CD4-positive, alpha-beta T cell (primary cell): ENCODE measurements at regions of chr10 and their contacts with region 1.

Region 1: GRCh38 chr10:133318494-133319127 is 9.9 kb downstream of the ZNF511 start:
- DNase-seq: peak; percentile 41 to 84 (median 64)
- ATAC-seq: peak; percentile 88
- H3K4me3 ChIP-seq: peak overlapping the region; percentile 55
- H3K4me3 Mint-ChIP-seq: peak overlapping the region; percentile 23
- H3K27ac ChIP-seq: no peak overlapping the region
- H3K27ac Mint-ChIP-seq: no peak overlapping the region
- H3K4me1 ChIP-seq: peaks cover 12% of the 10 kb centered on the region
- H3K4me1 Mint-ChIP-seq: peaks cover 13% of the 10 kb centered on the region
- H3K27me3 ChIP-seq: no peaks in the 10 kb centered on the region
- H3K27me3 Mint-ChIP-seq: peaks cover 11% of the 10 kb centered on the region
- CTCF ChIP-seq: peak; percentile 85

Region 2: DNA sequence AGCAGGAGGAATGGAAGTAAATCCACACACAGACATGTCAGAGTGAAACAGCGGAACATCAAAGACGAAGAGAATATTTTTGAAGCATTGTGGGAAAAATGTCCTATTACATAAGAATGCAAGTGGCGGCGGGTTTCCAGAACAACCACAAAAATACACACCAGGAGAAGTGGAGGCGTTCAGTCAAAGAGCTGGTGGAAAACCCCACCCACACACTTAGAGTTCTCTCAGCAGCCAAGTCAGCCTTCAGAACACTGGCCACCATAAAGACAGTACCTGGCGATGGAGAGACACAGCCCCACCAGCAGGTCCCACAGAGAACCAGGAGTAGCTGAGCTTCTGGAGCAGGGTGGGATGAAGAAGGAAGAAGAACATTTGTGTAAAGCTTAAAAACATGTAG is 556.3 kb before region 1 on chr10:
- CTCF ChIA-PET with region 1: no interaction called
- POLR2A ChIA-PET with region 1: no interaction called
- intact Hi-C with region 1: no loop called
- DNase-seq: no peak
- ATAC-seq: no peak
- H3K4me3 ChIP-seq: no peak overlapping the region
- H3K4me3 Mint-ChIP-seq: no peak overlapping the region
- H3K27ac ChIP-seq: no peak overlapping the region
- H3K27ac Mint-ChIP-seq: no peak overlapping the region
- H3K4me1 ChIP-seq: peaks cover 4% of the 10 kb centered on the region
- H3K4me1 Mint-ChIP-seq: peaks cover 10% of the 10 kb centered on the region
- H3K27me3 ChIP-seq: no peaks in the 10 kb centered on the region
- H3K27me3 Mint-ChIP-seq: no peaks in the 10 kb centered on the region
- CTCF ChIP-seq: no peak

Region 3: DNA sequence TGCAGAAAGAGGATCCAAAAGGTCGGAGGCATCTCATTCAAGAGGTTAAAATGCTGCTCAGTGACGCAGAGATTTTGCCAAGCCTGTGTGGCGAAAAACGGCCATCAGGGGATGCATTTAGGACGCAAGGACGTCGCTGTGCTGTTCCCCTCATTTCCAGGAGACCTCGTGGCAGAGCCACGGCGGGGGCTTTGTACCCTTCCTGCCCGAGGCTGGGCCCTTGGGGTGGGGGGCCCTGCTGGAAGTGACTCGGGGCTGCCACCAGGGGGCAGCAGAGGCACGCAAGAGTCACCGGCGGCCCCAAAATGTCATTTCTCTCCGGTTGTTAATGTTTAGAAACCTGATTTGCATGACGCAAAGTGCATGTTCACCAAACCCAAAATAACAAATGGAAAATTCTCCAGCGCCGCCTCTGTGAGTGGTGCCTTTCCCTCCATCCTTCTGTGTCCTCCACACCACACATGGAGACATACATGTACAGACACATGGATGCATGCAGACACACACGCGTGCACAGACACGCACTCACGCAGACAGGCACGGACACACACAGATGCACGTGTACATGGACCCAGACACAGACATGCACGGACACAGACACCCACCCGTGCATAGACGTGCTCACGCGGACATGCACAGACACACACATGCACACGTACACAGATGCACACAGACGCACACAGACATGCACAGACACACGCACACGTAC is 481.6 kb before region 1 on chr10:
- CTCF ChIA-PET with region 1: no interaction called
- POLR2A ChIA-PET with region 1: no interaction called
- intact Hi-C with region 1: loop called in 1 of 2 experiments (anchors 5 kb)
- DNase-seq: peak in 13 of 14 experiments; percentile 18 to 74 (median 35)
- ATAC-seq: no peak
- H3K4me3 ChIP-seq: no peak overlapping the region
- H3K4me3 Mint-ChIP-seq: no peak overlapping the region
- H3K27ac ChIP-seq: no peak overlapping the region
- H3K27ac Mint-ChIP-seq: no peak overlapping the region
- H3K4me1 ChIP-seq: peaks cover 7% of the 10 kb centered on the region
- H3K4me1 Mint-ChIP-seq: no peaks in the 10 kb centered on the region
- H3K27me3 ChIP-seq: peaks cover 4 to 14% of the 10 kb centered on the region in 2 experiments
- H3K27me3 Mint-ChIP-seq: peaks cover 5% of the 10 kb centered on the region
- CTCF ChIP-seq: peak; percentile 92

Region 4: DNA sequence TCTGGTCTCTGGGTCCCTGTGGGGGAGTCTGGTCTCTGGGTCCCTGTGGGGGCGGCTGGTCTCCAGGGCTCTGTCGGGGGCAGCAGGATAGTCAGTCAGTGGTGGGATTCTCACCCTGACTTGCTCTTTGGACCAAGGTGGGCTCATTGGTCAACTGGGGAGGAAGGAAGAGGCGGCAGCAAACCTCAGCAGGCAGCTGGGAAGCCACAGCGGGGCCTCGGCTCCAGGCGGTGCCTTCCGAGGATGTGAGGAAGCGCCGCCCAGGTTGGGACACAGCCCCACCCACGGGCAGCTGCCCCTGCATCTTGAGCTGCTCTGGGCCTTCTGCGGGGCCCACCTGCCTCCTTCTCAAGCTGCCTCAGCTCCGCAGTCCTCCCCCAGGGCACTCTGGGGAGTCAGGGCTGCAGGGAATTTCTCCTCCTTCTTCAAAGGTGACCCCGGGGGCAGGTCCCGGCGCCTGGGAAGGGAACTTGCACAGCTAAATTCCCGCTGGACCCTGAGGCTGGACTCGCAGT is 179.0 kb before region 1 on chr10:
- CTCF ChIA-PET with region 1: no interaction called
- POLR2A ChIA-PET with region 1: no interaction called
- intact Hi-C with region 1: loop called (anchors 1 to 5 kb)
- DNase-seq: peak in 3 of 14 experiments; percentile 3 to 25 (median 8)
- ATAC-seq: no peak
- H3K4me3 ChIP-seq: no peak overlapping the region
- H3K4me3 Mint-ChIP-seq: no peak overlapping the region
- H3K27ac ChIP-seq: no peak overlapping the region
- H3K27ac Mint-ChIP-seq: no peak overlapping the region
- H3K4me1 ChIP-seq: peaks cover 5% of the 10 kb centered on the region
- H3K4me1 Mint-ChIP-seq: peaks cover 6% of the 10 kb centered on the region
- H3K27me3 ChIP-seq: peaks cover 3 to 9% of the 10 kb centered on the region in 2 experiments
- H3K27me3 Mint-ChIP-seq: peaks cover 17% of the 10 kb centered on the region
- CTCF ChIP-seq: no peak

Region 5: DNA sequence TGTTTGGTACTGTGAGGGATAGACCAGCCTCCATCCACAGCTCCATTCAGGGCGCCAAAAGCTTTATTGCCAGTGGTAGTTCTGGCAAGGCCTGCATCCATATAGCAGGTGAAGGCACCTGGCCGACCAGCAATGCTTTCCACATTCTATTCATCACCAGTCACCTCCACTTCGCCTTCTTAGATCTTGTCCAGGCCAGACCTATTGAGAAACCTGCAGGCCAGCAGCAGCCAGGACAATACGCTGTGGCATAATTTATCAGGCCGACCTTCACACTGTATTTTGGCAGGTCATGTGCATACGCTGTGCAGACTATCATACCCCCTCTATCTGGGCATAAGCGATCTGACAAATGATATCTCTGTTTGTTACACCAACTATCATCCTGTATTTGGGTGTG is 173.8 kb before region 1 on chr10:
- CTCF ChIA-PET with region 1: no interaction called
- POLR2A ChIA-PET with region 1: no interaction called
- intact Hi-C with region 1: loop called (anchors 1 to 5 kb)
- DNase-seq: peak in 1 of 14 experiments; percentile 2
- ATAC-seq: no peak
- H3K4me3 ChIP-seq: no peak overlapping the region
- H3K4me3 Mint-ChIP-seq: no peak overlapping the region
- H3K27ac ChIP-seq: no peak overlapping the region
- H3K27ac Mint-ChIP-seq: no peak overlapping the region
- H3K4me1 ChIP-seq: peaks cover 5% of the 10 kb centered on the region
- H3K4me1 Mint-ChIP-seq: peaks cover 6% of the 10 kb centered on the region
- H3K27me3 ChIP-seq: peaks cover 10 to 12% of the 10 kb centered on the region in 2 experiments
- H3K27me3 Mint-ChIP-seq: peaks cover 64% of the 10 kb centered on the region
- CTCF ChIP-seq: no peak